Esophagus muscularis mucosa (tissue), 4 donors: ENCODE measurements at regions of chr6 and their contacts with region 1.

Region 1: GRCh38 chr6:44151348-44152108 is 7.1 kb upstream of the CAPN11 start:
- DNase-seq: no peak
- H3K4me3 ChIP-seq: no peak overlapping the region
- H3K27ac ChIP-seq: no peak overlapping the region
- H3K4me1 ChIP-seq: peaks cover 4 to 7% (median 6%) of the 10 kb centered on the region in 4 donors
- H3K27me3 ChIP-seq: no peaks in the 10 kb centered on the region
- CTCF ChIP-seq: peak in 2 of 3 experiments; percentile 97 to 99
- EP300 ChIP-seq: no peak
- POLR2A ChIP-seq: no peak

Region 2: GRCh38 chr6:43977404-43978111 is 174.0 kb before region 1 on chr6:
- intact Hi-C with region 1: no loop called
- DNase-seq: no peak
- H3K4me3 ChIP-seq: no peak overlapping the region
- H3K27ac ChIP-seq: no peak overlapping the region
- H3K4me1 ChIP-seq: peaks cover 11 to 25% (median 23%) of the 10 kb centered on the region in 4 donors
- H3K27me3 ChIP-seq: no peaks in the 10 kb centered on the region
- CTCF ChIP-seq: no peak
- EP300 ChIP-seq: no peak
- POLR2A ChIP-seq: no peak

Region 3: DNA sequence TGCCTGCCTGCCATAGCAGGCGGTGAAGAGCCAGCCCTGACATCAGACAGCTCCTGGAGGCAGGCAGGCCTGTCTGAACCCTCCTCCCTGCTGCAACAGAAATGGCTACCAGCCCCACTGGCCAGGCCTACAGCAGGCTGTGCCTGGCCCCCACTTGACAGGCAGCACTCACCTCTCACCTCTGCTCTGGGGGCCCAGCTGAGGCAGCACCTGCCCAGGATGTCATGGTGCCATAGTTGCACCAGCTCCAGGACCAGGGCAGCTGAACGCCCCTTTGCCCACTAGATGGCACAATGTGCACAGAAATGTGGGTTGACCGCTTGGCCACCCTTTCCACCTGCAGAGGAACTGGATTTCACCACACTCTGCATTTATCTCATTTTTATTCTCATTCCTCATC is 54.9 kb before region 1 on chr6:
- intact Hi-C with region 1: loop called (anchors 1 kb)
- DNase-seq: no peak
- H3K4me3 ChIP-seq: no peak overlapping the region
- H3K27ac ChIP-seq: no peak overlapping the region
- H3K4me1 ChIP-seq: peaks cover 0 to 4% (median 0%) of the 10 kb centered on the region in 4 donors
- H3K27me3 ChIP-seq: no peaks in the 10 kb centered on the region
- CTCF ChIP-seq: peak; percentile 81 to 91 (median 86)
- EP300 ChIP-seq: no peak
- POLR2A ChIP-seq: no peak

Region 4: GRCh38 chr6:44221291-44221960 is 69.9 kb after region 1 on chr6:
- intact Hi-C with region 1: no loop called
- DNase-seq: peak; percentile 97
- H3K4me3 ChIP-seq: peak overlapping the region; percentile 73 to 82 (median 77)
- H3K27ac ChIP-seq: peak overlapping the region; percentile 95 to 98 (median 96)
- H3K4me1 ChIP-seq: peaks cover 81 to 100% (median 95%) of the 10 kb centered on the region in 4 donors
- H3K27me3 ChIP-seq: no peaks in the 10 kb centered on the region
- CTCF ChIP-seq: peak; percentile 83 to 90 (median 84)
- EP300 ChIP-seq: peak; percentile 13
- POLR2A ChIP-seq: peak; percentile 25